ENCODE measurements at regions of chrX and their contacts with region 1.

Region 1: DNA sequence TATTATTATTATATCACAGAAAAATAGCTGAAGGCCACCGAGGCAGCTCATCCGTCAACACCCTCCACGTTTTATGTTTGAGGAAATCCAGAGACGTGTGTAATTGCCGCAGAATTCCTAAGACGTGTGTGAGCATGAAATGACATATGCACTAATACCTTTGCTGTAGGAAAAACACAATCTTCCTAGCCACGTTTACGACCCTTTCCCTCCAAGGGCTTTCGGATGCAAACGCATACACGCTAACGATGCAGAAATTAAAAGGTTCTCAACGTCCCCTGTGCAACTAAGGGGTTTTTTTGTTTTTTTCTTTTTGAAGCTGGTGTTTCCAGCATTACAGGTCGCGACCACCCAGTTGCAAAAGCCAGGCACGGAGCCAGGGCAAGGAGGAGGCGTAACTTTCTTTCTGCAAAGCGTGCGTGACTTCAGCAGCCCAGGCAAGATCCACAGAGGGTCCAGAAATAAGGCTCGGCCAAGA is 33.8 kb downstream of the CRLF2 start:
- DNase-seq: peak; percentile 11
- H3K4me3 Mint-ChIP-seq: no peak overlapping the region
- H3K27ac Mint-ChIP-seq: no peak overlapping the region
- H3K4me1 Mint-ChIP-seq: no peaks in the 10 kb centered on the region
- H3K27me3 Mint-ChIP-seq: no peaks in the 10 kb centered on the region

Region 2: GRCh38 chrX:1011642-1012283 is 166.9 kb before region 1 on chrX:
- CTCF ChIA-PET with region 1: no interaction called
- intact Hi-C with region 1: loop called (anchors 5 kb)
- DNase-seq: peak; percentile 10
- H3K4me3 Mint-ChIP-seq: no peak overlapping the region
- H3K27ac Mint-ChIP-seq: no peak overlapping the region
- H3K4me1 Mint-ChIP-seq: no peaks in the 10 kb centered on the region
- H3K27me3 Mint-ChIP-seq: no peaks in the 10 kb centered on the region

Region 3: DNA sequence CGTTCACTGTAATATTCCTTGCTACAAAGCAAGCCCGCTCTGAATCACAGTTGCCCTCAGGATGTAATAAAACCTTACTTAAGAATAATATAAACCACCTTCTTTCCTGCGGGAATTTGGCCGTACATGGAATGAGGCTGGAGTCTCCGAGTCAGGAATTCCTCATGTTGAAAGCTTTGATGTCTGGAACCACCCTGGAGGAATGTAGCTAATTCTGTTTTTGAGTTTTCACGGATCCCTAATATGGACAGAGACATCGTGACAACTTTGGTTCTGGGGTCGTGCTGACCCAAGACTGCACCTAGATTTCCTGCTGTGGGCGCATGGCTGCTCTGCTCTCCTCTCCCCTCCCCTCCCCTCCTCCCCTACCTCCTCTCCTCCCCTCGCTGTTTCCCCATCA is 24.6 kb before region 1 on chrX:
- CTCF ChIA-PET with region 1: no interaction called
- intact Hi-C with region 1: no loop called
- DNase-seq: no peak
- H3K4me3 Mint-ChIP-seq: no peak overlapping the region
- H3K27ac Mint-ChIP-seq: no peak overlapping the region
- H3K4me1 Mint-ChIP-seq: no peaks in the 10 kb centered on the region
- H3K27me3 Mint-ChIP-seq: peaks cover 3% of the 10 kb centered on the region

Region 4: DNA sequence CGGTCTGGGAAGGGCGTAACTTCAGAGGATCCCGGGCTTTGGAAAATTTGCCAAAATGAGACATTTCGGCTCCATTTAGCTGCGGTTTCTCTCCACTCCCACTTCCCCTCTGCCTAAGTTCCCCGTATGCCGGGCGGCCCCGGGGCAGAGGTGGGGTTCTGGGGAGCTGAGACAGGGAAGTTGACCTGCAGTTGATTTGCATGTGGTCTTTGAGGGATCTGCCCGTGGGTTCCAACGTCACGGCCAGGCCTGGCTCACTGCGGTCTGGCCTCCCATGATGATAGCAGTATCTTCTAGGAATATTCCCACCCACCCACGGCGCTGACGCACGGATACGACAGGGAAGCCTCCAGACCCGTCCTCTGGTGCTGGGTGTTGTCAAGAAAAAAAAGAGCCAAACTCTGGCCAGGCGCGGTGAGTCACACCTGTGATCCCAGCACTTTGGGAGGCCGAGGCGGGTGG is 61.1 kb after region 1 on chrX:
- CTCF ChIA-PET with region 1: no interaction called
- intact Hi-C with region 1: loop called (anchors 5 kb)
- DNase-seq: peak; percentile 31
- H3K4me3 Mint-ChIP-seq: no peak overlapping the region
- H3K27ac Mint-ChIP-seq: no peak overlapping the region
- H3K4me1 Mint-ChIP-seq: peaks cover 14% of the 10 kb centered on the region
- H3K27me3 Mint-ChIP-seq: no peaks in the 10 kb centered on the region

Measured in activated naive CD4-positive, alpha-beta T cell treated with anti-CD3 and anti-CD28 coated beads for 36 hours (primary cell).